ENCODE measurements at regions of chr3 and their contacts with region 1.

Region 1: GRCh38 chr3:46705022-46705530 is 3.9 kb downstream of the TMIE start:
- DNase-seq: peak; percentile 57
- H3K4me3 ChIP-seq: no peak overlapping the region
- H3K27ac ChIP-seq: no peak overlapping the region
- H3K4me1 ChIP-seq: no peaks in the 10 kb centered on the region
- H3K27me3 ChIP-seq: peaks cover 10% of the 10 kb centered on the region
- CTCF ChIP-seq: peak; percentile 94 to 98

Region 2: GRCh38 chr3:46742992-46743585 is 38.0 kb after region 1 on chr3:
- CTCF ChIA-PET with region 1: no interaction called
- dilution Hi-C with region 1: no loop called
- in situ Hi-C with region 1: no loop called
- intact Hi-C with region 1: no loop called
- DNase-seq: no peak
- H3K4me3 ChIP-seq: no peak overlapping the region
- H3K27ac ChIP-seq: no peak overlapping the region
- H3K4me1 ChIP-seq: no peaks in the 10 kb centered on the region
- H3K27me3 ChIP-seq: peaks cover 3% of the 10 kb centered on the region
- CTCF ChIP-seq: no peak

Region 3: GRCh38 chr3:46866720-46867549 is 161.9 kb after region 1 on chr3:
- CTCF ChIA-PET with region 1: no interaction called
- dilution Hi-C with region 1: no loop called
- in situ Hi-C with region 1: no loop called
- intact Hi-C with region 1: loop called (anchors 1 kb)
- DNase-seq: peak; percentile 22
- H3K4me3 ChIP-seq: no peak overlapping the region
- H3K27ac ChIP-seq: no peak overlapping the region
- H3K4me1 ChIP-seq: no peaks in the 10 kb centered on the region
- H3K27me3 ChIP-seq: no peaks in the 10 kb centered on the region
- CTCF ChIP-seq: peak; percentile 74 to 95

Region 4: GRCh38 chr3:46895204-46895660 is 190.2 kb after region 1 on chr3:
- CTCF ChIA-PET with region 1: no interaction called
- dilution Hi-C with region 1: no loop called
- in situ Hi-C with region 1: no loop called
- intact Hi-C with region 1: loop called (anchors 1 kb)
- DNase-seq: peak; percentile 25
- H3K4me3 ChIP-seq: no peak overlapping the region
- H3K27ac ChIP-seq: no peak overlapping the region
- H3K4me1 ChIP-seq: peaks cover 11% of the 10 kb centered on the region
- H3K27me3 ChIP-seq: no peaks in the 10 kb centered on the region
- CTCF ChIP-seq: peak; percentile 70 to 88

Region 5: GRCh38 chr3:46909535-46910442 is 204.7 kb after region 1 on chr3:
- CTCF ChIA-PET with region 1: no interaction called
- dilution Hi-C with region 1: no loop called
- in situ Hi-C with region 1: no loop called
- intact Hi-C with region 1: loop called (anchors 1 kb)
- DNase-seq: peak; percentile 65
- H3K4me3 ChIP-seq: no peak overlapping the region
- H3K27ac ChIP-seq: no peak overlapping the region
- H3K4me1 ChIP-seq: peaks cover 21% of the 10 kb centered on the region
- H3K27me3 ChIP-seq: no peaks in the 10 kb centered on the region
- CTCF ChIP-seq: peak; percentile 87 to 88

Region 6: GRCh38 chr3:47370887-47371697 is 666.0 kb after region 1 on chr3:
- CTCF ChIA-PET with region 1: no interaction called
- dilution Hi-C with region 1: no loop called
- in situ Hi-C with region 1: no loop called
- intact Hi-C with region 1: loop called (anchors 2 kb)
- DNase-seq: no peak
- H3K4me3 ChIP-seq: no peak overlapping the region
- H3K27ac ChIP-seq: no peak overlapping the region
- H3K4me1 ChIP-seq: no peaks in the 10 kb centered on the region
- H3K27me3 ChIP-seq: no peaks in the 10 kb centered on the region
- CTCF ChIP-seq: peak in 1 of 2 donors; percentile 37

Region 7: GRCh38 chr3:47781685-47782445 is 1076.8 kb after region 1 on chr3 and contains the start of gene SMARCC1:
- CTCF ChIA-PET with region 1: no interaction called
- dilution Hi-C with region 1: no loop called
- in situ Hi-C with region 1: no loop called
- intact Hi-C with region 1: loop called (anchors 10 kb)
- DNase-seq: peak; percentile 98
- H3K4me3 ChIP-seq: peak within 1 kb of the TSS; percentile 89 to 93 (median 89)
- H3K27ac ChIP-seq: peak within 1 kb of the TSS; percentile 88
- H3K4me1 ChIP-seq: peaks cover 13% of the 10 kb centered on the region
- H3K27me3 ChIP-seq: no peaks in the 10 kb centered on the region
- CTCF ChIP-seq: no peak
- total RNA-seq, gene SMARCC1: 52.8 to 94.1 TPM

Measured in mammary epithelial cell (primary cell).